ENCODE measurements at regions of chr11 and their contacts with region 1.

Region 1: GRCh38 chr11:9613118-9613829 is 39.8 kb downstream of the WEE1 start:
- DNase-seq: peak; percentile 90 to 92
- H3K4me3 ChIP-seq: peak overlapping the region; percentile 75
- H3K27ac ChIP-seq: peak overlapping the region; percentile 96
- H3K4me1 ChIP-seq: peaks cover 25% of the 10 kb centered on the region
- H3K27me3 ChIP-seq: no peaks in the 10 kb centered on the region
- CTCF ChIP-seq: peak; percentile 87

Region 2: DNA sequence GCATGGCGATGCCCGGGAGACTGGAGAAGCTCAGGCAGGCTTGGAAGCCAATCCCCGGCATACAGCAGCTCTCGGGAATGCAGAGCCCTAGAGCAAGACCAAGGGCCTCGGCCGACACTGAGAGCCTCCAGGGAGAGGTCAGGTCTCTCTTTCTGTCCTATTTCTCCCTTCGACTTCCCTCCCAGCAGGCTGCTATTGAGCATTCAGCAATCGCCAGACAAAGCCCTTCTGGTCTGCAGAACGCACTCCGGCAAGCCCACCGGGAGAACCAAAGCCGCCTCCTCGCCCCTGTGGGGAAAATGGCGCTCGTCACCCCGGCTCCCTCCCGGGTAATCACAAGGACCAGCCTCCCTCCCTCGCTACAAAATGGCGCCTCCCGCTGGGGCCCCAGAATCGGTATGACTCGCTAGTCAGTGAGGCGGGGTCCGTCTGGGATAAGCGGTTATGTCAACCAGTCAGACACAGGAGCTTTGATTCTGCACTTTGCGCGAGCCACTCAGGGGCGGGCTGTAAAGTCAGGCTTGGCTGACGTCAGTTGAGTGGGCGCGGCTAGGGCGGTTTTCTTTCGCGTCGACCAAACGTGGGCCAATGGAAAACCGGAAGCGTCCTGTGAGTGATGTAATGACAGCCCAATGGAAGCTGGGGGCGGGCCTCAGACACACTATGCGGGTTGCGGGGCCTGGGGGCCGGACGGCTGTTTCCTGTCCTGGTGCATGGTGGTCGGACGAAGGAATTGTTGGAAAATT is 152.8 kb before region 1 on chr11 and contains the start of gene ZNF143:
- CTCF ChIA-PET with region 1: no interaction called
- POLR2A ChIA-PET with region 1: interaction called, 6 read pairs
- intact Hi-C with region 1: loop called (anchors 2 kb)
- DNase-seq: peak; percentile 97
- H3K4me3 ChIP-seq: peak within 1 kb of the TSS; percentile 88
- H3K27ac ChIP-seq: peak within 1 kb of the TSS; percentile 96
- H3K4me1 ChIP-seq: peaks cover 22% of the 10 kb centered on the region
- H3K27me3 ChIP-seq: no peaks in the 10 kb centered on the region
- CTCF ChIP-seq: no peak
- total RNA-seq, gene ZNF143: 14.7 and 16.5 TPM in 2 replicates

Region 3: DNA sequence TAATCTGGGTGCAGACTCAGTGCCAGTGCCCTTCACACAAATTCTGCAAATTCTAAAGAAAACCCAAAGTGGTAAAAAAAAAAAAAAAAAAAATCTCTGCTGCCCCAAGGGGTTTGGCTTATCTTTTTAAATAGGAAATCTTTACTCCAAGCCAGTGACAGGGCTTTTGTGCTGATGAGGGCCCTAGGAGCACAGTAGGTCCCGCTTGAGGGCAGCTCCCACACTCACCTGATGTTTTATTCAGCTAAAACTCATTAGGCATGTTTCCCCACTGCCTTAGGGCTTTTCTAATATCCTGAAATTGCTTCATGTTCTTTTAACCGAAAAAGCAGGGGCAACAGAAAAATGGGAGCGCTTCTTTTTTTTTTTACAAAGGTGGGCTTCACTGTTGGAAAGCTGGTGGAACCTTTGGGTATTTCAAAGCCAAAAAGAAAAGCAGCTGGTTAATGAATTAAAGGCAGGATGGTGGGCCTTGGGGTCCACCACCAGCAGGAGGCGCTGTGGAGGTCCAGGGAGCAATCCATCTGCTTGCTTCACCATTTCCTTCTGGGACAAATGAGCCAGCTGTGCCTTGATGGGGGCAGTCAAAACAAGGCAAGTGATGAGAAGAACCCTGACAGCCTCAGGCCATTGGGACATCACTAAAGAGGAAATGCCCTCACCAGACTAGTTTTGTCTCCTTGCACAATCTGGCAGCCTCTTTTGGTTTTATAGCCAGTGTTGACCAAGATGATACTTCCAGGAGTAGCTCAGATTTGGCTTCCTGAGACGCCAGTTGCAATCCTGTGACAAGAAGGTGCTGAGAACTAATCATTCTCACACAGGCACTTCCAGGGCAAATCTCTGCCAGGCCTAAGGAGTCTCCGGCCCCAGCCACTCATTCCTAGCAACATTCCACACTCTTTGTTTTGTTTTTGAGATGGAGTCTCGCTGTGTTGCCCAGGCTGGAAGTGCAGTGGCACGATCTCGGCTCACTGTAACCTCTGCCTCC is 78.2 kb before region 1 on chr11:
- CTCF ChIA-PET with region 1: interaction called, 3 read pairs
- POLR2A ChIA-PET with region 1: no interaction called
- intact Hi-C with region 1: loop called (anchors 2 kb)
- DNase-seq: peak; percentile 48 to 88
- H3K4me3 ChIP-seq: no peak overlapping the region
- H3K27ac ChIP-seq: peak overlapping the region; percentile 54
- H3K4me1 ChIP-seq: peaks cover 30% of the 10 kb centered on the region
- H3K27me3 ChIP-seq: no peaks in the 10 kb centered on the region
- CTCF ChIP-seq: peak; percentile 86

Region 4: DNA sequence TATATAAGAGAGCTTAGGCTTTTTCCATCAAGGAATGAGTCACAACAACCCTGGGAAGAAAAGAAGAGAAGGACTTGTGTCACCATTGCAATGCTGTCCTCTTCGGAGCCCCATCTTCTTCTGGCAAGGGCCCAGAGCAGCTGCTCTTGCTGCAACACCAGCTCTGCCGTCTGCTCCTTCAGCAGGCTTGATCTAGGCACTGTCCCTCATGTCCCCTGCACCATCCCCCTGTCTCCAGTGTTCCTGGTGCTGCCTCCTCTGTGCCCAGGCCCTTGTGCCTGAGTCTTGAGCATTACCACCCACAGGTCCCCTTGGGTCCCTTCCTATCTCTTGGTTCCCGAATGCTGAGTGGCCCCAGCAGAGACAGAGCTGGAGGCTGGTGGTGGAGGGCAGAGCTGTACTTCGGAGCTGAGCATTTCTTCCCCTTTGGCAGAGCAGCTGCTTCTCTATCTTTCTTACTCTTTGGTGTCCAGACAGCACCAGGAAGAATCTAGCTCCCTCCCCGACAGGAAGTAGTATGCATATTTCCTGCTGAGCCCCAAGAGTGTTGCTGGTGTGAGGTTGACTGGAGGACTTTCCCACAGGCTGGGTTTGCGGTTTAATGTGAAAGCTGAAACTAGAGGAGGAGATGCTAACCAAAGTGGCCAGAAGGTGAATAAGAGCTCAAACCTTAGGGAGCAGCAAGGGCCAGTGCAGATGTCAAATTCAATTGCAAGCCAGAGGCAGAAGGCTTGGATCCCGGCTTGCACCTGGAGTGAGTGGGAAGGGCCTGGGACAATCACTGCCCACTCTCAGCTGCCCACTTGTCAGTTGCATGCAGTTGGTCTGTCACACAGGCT is 12.0 kb before region 1 on chr11:
- CTCF ChIA-PET with region 1: no interaction called
- POLR2A ChIA-PET with region 1: interaction called, 13 read pairs
- intact Hi-C with region 1: no loop called
- DNase-seq: peak; percentile 53 to 84
- H3K4me3 ChIP-seq: peak overlapping the region; percentile 35; the same call in 1 of the 2 replicates
- H3K27ac ChIP-seq: peak overlapping the region; percentile 97
- H3K4me1 ChIP-seq: peaks cover 24% of the 10 kb centered on the region
- H3K27me3 ChIP-seq: no peaks in the 10 kb centered on the region
- CTCF ChIP-seq: no peak

Region 5: GRCh38 chr11:9757809-9758636 is 144.7 kb after region 1 on chr11:
- CTCF ChIA-PET with region 1: no interaction called
- POLR2A ChIA-PET with region 1: interaction called, 5 read pairs
- intact Hi-C with region 1: loop called (anchors 2 kb)
- DNase-seq: peak in 1 of 2 experiments; percentile 75
- H3K4me3 ChIP-seq: peak overlapping the region; percentile 81
- H3K27ac ChIP-seq: peak overlapping the region; percentile 76
- H3K4me1 ChIP-seq: peaks cover 29% of the 10 kb centered on the region
- H3K27me3 ChIP-seq: no peaks in the 10 kb centered on the region
- CTCF ChIP-seq: peak; percentile 42; the same call in 1 of the 2 replicates

Region 6: DNA sequence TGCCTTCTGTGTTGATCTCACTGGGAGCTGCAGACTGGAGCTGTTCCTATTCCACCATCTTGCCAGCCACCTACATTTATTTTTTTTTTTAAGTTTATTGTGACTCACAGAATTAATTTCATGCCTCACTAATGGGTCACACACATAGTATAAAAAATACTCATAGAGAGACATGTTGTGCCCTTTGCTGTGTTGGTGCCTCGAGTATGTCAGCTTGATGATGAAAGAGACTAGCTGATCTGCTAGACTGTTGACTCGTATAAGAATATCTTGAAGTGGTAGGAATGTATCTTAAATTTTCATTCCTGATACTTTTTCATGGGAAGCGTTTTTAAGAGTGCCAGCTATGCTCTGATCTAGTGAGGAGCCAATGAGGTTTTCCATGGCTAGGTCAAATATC is 813.2 kb after region 1 on chr11:
- CTCF ChIA-PET with region 1: no interaction called
- POLR2A ChIA-PET with region 1: no interaction called
- intact Hi-C with region 1: no loop called
- DNase-seq: no peak
- H3K4me3 ChIP-seq: no peak overlapping the region
- H3K27ac ChIP-seq: no peak overlapping the region
- H3K4me1 ChIP-seq: no peaks in the 10 kb centered on the region
- H3K27me3 ChIP-seq: no peaks in the 10 kb centered on the region
- CTCF ChIP-seq: no peak